ENCODE measurements at regions of chr12 and their contacts with region 1.

Region 1: GRCh38 chr12:85866986-85867776 is 6.9 kb upstream of the NTS start:
- DNase-seq: peak; percentile 13
- H3K4me3 ChIP-seq: no peak overlapping the region
- H3K27ac ChIP-seq: no peak overlapping the region
- H3K27me3 ChIP-seq: no peaks in the 10 kb centered on the region
- CTCF ChIP-seq: peak; percentile 86

Region 2: DNA sequence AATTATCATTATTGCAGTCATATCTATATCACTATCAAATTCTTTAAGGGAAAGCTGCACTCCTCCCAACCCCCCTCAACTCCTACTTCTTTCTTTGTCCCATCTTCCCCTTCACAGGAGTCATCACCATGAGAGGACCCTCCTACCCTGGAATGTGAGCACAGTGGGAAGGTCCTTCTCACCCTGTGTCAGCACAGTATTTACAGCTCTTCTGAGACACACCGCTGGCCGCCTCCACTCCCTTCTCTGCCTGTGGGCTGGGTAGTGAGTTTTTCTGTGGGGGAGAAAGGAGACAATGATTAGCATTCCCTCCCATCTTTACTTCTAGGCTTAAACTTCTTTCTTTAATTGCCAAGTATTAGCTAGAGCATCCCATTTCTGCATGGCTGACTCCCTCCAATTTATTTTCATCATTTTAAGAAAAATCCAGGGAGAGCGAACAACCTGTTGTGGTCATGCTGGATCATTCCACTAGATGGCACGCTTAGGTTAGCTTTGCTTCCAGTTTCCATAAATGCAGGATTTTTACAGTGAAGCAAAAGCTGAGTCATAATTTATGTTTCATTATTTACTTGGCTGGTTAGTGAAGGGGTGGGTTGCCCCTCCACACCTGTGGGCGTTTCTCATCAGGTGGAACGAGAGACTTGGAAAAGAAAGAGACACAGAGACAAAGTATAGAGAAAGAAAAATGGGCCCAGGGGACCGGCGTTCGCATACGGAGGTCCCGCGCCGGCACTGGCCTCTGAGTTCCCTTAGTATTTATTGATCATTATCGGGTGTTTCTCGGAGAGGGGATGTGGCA is 398.6 kb before region 1 on chr12:
- CTCF ChIA-PET with region 1: interaction called, 68 read pairs
- POLR2A ChIA-PET with region 1: no interaction called
- DNase-seq: peak; percentile 8
- H3K4me3 ChIP-seq: peak overlapping the region; percentile 43
- H3K27ac ChIP-seq: no peak overlapping the region
- H3K27me3 ChIP-seq: no peaks in the 10 kb centered on the region
- CTCF ChIP-seq: peak; percentile 86

Region 3: DNA sequence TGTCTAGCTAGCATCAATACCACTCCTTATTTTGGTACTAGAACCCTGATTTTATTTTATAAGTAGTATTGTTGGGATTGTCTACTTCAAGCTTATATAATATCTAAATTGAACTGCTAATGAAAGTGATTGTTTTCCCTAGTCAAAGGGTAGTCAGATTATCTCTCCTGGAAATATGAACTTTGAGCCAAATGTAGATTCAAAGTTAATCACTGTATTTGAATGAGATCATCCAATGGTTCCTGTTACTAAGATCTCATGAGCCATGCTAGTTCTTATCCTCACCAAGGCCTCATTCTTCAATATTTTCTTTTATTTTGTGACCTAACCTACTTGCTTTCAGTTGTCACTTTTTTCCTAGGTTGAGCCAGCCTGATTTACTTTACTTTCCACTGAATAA is 307.6 kb before region 1 on chr12:
- CTCF ChIA-PET with region 1: interaction called, 12 read pairs
- POLR2A ChIA-PET with region 1: no interaction called
- DNase-seq: no peak
- H3K4me3 ChIP-seq: no peak overlapping the region
- H3K27ac ChIP-seq: no peak overlapping the region
- H3K27me3 ChIP-seq: no peaks in the 10 kb centered on the region
- CTCF ChIP-seq: no peak

Region 4: GRCh38 chr12:85580562-85581168 is 286.5 kb before region 1 on chr12:
- CTCF ChIA-PET with region 1: interaction called, 116 read pairs
- POLR2A ChIA-PET with region 1: no interaction called
- DNase-seq: no peak
- H3K4me3 ChIP-seq: no peak overlapping the region
- H3K27ac ChIP-seq: no peak overlapping the region
- H3K27me3 ChIP-seq: no peaks in the 10 kb centered on the region
- CTCF ChIP-seq: no peak

Region 5: DNA sequence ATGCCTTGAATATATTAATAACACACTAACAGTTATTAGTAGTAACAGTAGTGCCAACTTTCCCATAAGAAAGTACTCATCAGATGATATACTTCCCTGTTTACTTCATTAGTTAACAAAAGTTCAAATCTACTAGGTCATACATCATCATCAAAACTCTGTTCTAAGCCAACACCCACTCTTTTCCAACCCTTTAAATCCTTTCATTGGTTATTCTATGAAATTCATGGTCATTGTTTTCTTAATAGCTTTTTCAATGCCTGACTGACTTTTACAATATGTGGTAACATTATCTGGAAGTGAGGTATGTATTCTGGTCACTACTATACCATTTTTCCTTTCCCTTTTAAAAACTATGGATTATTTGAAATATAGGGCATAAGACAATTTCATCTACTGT is 16.6 kb after region 1 on chr12:
- CTCF ChIA-PET with region 1: interaction called, 15 read pairs
- POLR2A ChIA-PET with region 1: no interaction called
- DNase-seq: no peak
- H3K4me3 ChIP-seq: no peak overlapping the region
- H3K27ac ChIP-seq: no peak overlapping the region
- H3K27me3 ChIP-seq: no peaks in the 10 kb centered on the region
- CTCF ChIP-seq: no peak